Activated naive CD4-positive, alpha-beta T cell treated with anti-CD3 and anti-CD28 coated beads for 36 hours (primary cell): ENCODE measurements at regions of chr14 and their contacts with region 1.

Region 1: GRCh38 chr14:98173305-98173704 is 1098.7 kb downstream of the BCL11B start:
- DNase-seq: peak; percentile 78
- H3K4me3 Mint-ChIP-seq: peak overlapping the region; percentile 49
- H3K27ac Mint-ChIP-seq: peak overlapping the region; percentile 98
- H3K4me1 Mint-ChIP-seq: peaks cover 97% of the 10 kb centered on the region
- H3K27me3 Mint-ChIP-seq: no peaks in the 10 kb centered on the region

Region 2: GRCh38 chr14:97458661-97459579 is 714.4 kb before region 1 on chr14:
- CTCF ChIA-PET with region 1: no interaction called
- intact Hi-C with region 1: loop called (anchors 10 kb)
- DNase-seq: peak; percentile 91
- H3K4me3 Mint-ChIP-seq: peak overlapping the region; percentile 96
- H3K27ac Mint-ChIP-seq: peak overlapping the region; percentile 100
- H3K4me1 Mint-ChIP-seq: peaks cover 32% of the 10 kb centered on the region
- H3K27me3 Mint-ChIP-seq: no peaks in the 10 kb centered on the region

Region 3: GRCh38 chr14:97994020-97994531 is 179.2 kb before region 1 on chr14:
- CTCF ChIA-PET with region 1: no interaction called
- intact Hi-C with region 1: loop called (anchors 1 kb)
- DNase-seq: peak; percentile 71
- H3K4me3 Mint-ChIP-seq: peak overlapping the region; percentile 70
- H3K27ac Mint-ChIP-seq: peak overlapping the region; percentile 100
- H3K4me1 Mint-ChIP-seq: peaks cover 82% of the 10 kb centered on the region
- H3K27me3 Mint-ChIP-seq: no peaks in the 10 kb centered on the region

Region 4: GRCh38 chr14:98198385-98198784 is 25.1 kb after region 1 on chr14:
- CTCF ChIA-PET with region 1: interaction called, 7 read pairs
- intact Hi-C with region 1: loop called (anchors 1 kb)
- DNase-seq: peak; percentile 60
- H3K4me3 Mint-ChIP-seq: peak overlapping the region; percentile 9
- H3K27ac Mint-ChIP-seq: peak overlapping the region; percentile 73
- H3K4me1 Mint-ChIP-seq: peaks cover 85% of the 10 kb centered on the region
- H3K27me3 Mint-ChIP-seq: no peaks in the 10 kb centered on the region

Region 5: DNA sequence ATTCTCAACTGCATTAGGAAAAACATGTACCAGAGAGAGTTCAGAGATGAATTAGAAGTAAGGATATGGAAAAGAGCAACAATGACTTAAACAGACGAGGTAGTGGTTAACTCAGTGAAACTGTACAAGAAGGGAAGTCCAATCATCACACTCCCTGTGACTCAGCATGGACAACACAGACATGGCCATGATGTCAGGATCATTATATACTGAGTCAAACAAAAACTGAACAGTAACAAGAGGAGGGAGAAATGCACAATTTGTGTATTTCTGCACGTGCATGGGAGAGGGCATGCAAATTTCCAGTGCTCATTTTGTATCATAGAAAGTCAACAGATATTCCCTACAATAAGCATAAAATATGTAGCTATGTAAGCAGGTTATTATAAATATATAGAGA is 60.9 kb after region 1 on chr14:
- CTCF ChIA-PET with region 1: interaction called, 3 read pairs
- intact Hi-C with region 1: loop called (anchors 1 kb)
- DNase-seq: peak; percentile 82
- H3K4me3 Mint-ChIP-seq: no peak overlapping the region
- H3K27ac Mint-ChIP-seq: peak overlapping the region; percentile 71
- H3K4me1 Mint-ChIP-seq: peaks cover 74% of the 10 kb centered on the region
- H3K27me3 Mint-ChIP-seq: no peaks in the 10 kb centered on the region

Region 6: GRCh38 chr14:100078991-100079725 is 1905.9 kb after region 1 on chr14:
- CTCF ChIA-PET with region 1: no interaction called
- intact Hi-C with region 1: loop called (anchors 10 kb)
- DNase-seq: peak; percentile 78
- H3K4me3 Mint-ChIP-seq: peak overlapping the region; percentile 74
- H3K27ac Mint-ChIP-seq: peak overlapping the region; percentile 96
- H3K4me1 Mint-ChIP-seq: peaks cover 94% of the 10 kb centered on the region
- H3K27me3 Mint-ChIP-seq: no peaks in the 10 kb centered on the region